ENCODE measurements at regions of chr5 and their contacts with region 1.

Region 1: DNA sequence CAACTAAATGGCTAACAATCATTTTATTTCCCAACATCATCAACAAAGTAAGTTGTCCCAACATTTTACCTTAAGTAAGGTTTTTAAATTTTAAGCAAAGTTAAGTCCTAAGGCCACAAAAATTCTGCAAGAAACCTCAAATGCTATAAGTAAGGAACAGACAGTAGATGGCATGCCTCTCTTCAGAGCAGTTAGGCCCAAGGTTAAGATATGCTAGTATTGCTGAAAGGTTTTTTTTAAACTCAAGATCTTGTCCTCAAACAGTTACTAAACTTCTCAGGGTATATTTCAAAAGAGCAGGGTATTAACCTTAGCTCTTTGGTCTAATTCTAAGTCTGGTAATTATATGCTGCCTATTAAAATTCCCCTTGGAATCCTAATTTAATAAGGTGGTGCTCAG is 35.1 kb downstream of the PJA2 start:
- DNase-seq: no peak
- H3K4me3 ChIP-seq: no peak overlapping the region
- H3K27ac ChIP-seq: no peak overlapping the region
- H3K4me1 ChIP-seq: no peaks in the 10 kb centered on the region
- H3K27me3 ChIP-seq: no peaks in the 10 kb centered on the region
- CTCF ChIP-seq: no peak
- POLR2A ChIP-seq: no peak

Region 2: GRCh38 chr5:109388407-109388806 is 13.8 kb after region 1 on chr5:
- intact Hi-C with region 1: no loop called
- DNase-seq: no peak
- H3K4me3 ChIP-seq: no peak overlapping the region
- H3K27ac ChIP-seq: no peak overlapping the region
- H3K4me1 ChIP-seq: peaks cover 0 to 12% of the 10 kb centered on the region in 2 donors
- H3K27me3 ChIP-seq: no peaks in the 10 kb centered on the region
- CTCF ChIP-seq: no peak
- POLR2A ChIP-seq: no peak

Region 3: GRCh38 chr5:109682383-109682782 is 307.8 kb after region 1 on chr5:
- intact Hi-C with region 1: loop called (anchors 5 kb)
- DNase-seq: no peak
- H3K4me3 ChIP-seq: no peak overlapping the region
- H3K27ac ChIP-seq: no peak overlapping the region
- H3K4me1 ChIP-seq: no peaks in the 10 kb centered on the region
- H3K27me3 ChIP-seq: no peaks in the 10 kb centered on the region
- CTCF ChIP-seq: no peak
- POLR2A ChIP-seq: no peak